Gastrocnemius medialis (tissue), 4 donors: ENCODE measurements at regions of chr4 and their contacts with region 1.

Region 1: DNA sequence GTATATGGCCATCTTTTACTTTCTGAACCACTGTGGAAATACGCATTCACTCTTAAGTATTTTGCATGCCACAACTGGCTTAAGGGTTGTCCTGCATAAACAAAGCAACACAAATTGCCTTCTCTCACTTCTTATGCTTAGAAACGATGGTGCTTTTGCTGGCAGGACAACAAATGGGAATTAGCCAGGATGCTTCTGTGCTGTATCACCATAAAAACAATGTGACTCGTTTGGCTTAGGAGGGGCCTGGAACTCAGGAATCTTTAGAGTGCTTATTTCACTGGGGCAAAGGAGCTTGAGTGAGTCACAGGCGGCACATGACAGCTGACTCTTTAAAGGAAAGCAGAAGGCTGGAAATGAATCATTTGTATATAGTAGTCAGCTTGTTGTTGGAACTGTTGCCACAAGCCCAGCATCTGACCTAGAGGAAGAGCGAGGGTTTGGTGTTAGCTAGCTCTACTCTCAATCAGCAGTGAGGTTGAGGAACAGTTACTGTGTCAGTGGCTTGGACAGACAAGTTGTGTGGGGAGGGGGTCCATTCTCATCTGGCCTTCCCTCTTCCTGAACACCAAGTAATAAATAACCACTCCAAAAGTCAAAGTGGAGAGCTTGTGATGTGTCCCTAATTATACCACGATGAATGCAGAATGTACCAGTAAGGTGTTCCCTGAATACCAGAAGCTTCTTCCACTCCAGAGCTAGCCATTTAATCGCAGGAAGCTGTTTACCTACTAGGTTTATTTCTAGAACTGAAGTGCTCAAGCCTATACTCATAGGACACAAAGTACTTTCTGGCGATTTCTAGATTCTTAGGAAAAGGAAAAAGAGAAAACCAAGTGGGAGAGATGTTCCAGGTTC is 293.1 kb downstream of the CAMK2D start:
- DNase-seq: peak; percentile 95
- ATAC-seq: peak; percentile 91 to 92
- H3K4me3 ChIP-seq: peak overlapping the region; percentile 4 to 40 (median 28)
- H3K27ac ChIP-seq: peak overlapping the region; percentile 86 to 96 (median 94)
- H3K4me1 ChIP-seq: peaks cover 39 to 57% of the 10 kb centered on the region in 2 donors
- H3K27me3 ChIP-seq: no peaks in the 10 kb centered on the region
- CTCF ChIP-seq: no peak
- POLR2A ChIP-seq: peak; percentile 57 to 85

Region 2: GRCh38 chr4:113445286-113445685 is 23.1 kb before region 1 on chr4:
- in situ Hi-C with region 1: no loop called
- intact Hi-C with region 1: loop called (anchors 2 kb)
- DNase-seq: peak; percentile 63 to 69
- ATAC-seq: peak; percentile 86 to 87
- H3K4me3 ChIP-seq: no peak overlapping the region
- H3K27ac ChIP-seq: peak overlapping the region; percentile 55 to 62 (median 56)
- H3K4me1 ChIP-seq: peaks cover 20 to 51% of the 10 kb centered on the region in 2 donors
- H3K27me3 ChIP-seq: no peaks in the 10 kb centered on the region
- CTCF ChIP-seq: no peak
- POLR2A ChIP-seq: no peak

Region 3: DNA sequence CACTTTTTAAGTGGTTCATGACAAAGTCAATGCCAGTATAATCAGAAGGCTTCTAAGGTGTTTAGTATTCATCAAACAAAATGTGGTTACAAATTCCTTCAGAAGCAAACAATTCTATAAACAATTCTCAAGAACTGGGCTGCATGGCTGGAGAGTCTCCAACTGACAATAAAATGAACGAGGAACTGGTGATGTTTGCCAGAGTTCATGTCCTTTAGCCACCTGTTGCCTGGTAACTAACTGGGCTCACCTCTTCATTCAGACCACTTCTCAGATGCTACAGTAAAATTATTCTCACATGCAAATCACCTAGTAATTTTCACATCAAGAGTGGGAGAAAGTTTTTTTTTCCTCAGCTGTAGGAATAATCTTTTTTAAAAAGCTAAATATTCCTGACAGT is 239.9 kb after region 1 on chr4:
- in situ Hi-C with region 1: no loop called
- intact Hi-C with region 1: loop called (anchors 10 kb)
- DNase-seq: peak in 1 of 2 donors; percentile 28
- ATAC-seq: peak; percentile 36 to 63
- H3K4me3 ChIP-seq: no peak overlapping the region
- H3K27ac ChIP-seq: peak overlapping the region; percentile 74 to 85 (median 81)
- H3K4me1 ChIP-seq: peaks cover 43 to 67% of the 10 kb centered on the region in 2 donors
- H3K27me3 ChIP-seq: no peaks in the 10 kb centered on the region
- CTCF ChIP-seq: no peak
- POLR2A ChIP-seq: no peak